Right cardiac atrium (tissue), 5 donors: ENCODE measurements at regions of chr18 and their contacts with region 1.

Region 1: GRCh38 chr18:2494921-2495320 is 76.4 kb downstream of the METTL4 start:
- DNase-seq: no peak
- ATAC-seq: no peak
- H3K4me3 ChIP-seq: no peak overlapping the region
- H3K27ac ChIP-seq: no peak overlapping the region
- H3K4me1 ChIP-seq: no peaks in the 10 kb centered on the region
- H3K27me3 ChIP-seq: no peaks in the 10 kb centered on the region

Region 2: DNA sequence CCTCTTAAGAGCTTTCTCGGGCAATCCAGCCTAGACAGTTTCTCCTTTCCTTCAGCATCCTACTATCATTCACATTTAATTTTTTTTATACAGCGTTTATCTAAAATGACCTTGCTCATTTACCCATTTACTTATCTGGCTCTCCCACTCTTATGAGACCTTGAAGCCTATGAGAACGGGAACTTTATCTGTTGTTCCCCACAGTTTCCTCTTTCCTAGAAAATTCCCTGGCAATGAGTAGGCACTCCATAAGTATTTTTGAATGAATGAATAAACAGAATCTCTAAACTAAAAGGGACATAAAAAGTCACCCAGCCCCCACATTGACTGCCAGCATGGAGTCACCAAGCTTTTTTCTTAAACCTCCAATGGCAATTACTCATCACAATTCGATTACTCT is 276.8 kb before region 1 on chr18:
- intact Hi-C with region 1: no loop called
- DNase-seq: no peak
- ATAC-seq: no peak
- H3K4me3 ChIP-seq: no peak overlapping the region
- H3K27ac ChIP-seq: no peak overlapping the region
- H3K4me1 ChIP-seq: no peaks in the 10 kb centered on the region
- H3K27me3 ChIP-seq: no peaks in the 10 kb centered on the region

Region 3: GRCh38 chr18:2442791-2443398 is 52.0 kb before region 1 on chr18:
- intact Hi-C with region 1: loop called in 1 of 4 experiments (anchors 10 kb)
- DNase-seq: no peak
- ATAC-seq: no peak
- H3K4me3 ChIP-seq: no peak overlapping the region
- H3K27ac ChIP-seq: no peak overlapping the region
- H3K4me1 ChIP-seq: no peaks in the 10 kb centered on the region
- H3K27me3 ChIP-seq: no peaks in the 10 kb centered on the region

Region 4: GRCh38 chr18:2723207-2723606 is 228.3 kb after region 1 on chr18:
- intact Hi-C with region 1: no loop called
- DNase-seq: no peak
- ATAC-seq: no peak
- H3K4me3 ChIP-seq: no peak overlapping the region
- H3K27ac ChIP-seq: no peak overlapping the region
- H3K4me1 ChIP-seq: peaks cover 2% of the 10 kb centered on the region
- H3K27me3 ChIP-seq: no peaks in the 10 kb centered on the region